Prostate gland (tissue), 2 donors: ENCODE measurements at regions of chr12 and their contacts with region 1.

Region 1: DNA sequence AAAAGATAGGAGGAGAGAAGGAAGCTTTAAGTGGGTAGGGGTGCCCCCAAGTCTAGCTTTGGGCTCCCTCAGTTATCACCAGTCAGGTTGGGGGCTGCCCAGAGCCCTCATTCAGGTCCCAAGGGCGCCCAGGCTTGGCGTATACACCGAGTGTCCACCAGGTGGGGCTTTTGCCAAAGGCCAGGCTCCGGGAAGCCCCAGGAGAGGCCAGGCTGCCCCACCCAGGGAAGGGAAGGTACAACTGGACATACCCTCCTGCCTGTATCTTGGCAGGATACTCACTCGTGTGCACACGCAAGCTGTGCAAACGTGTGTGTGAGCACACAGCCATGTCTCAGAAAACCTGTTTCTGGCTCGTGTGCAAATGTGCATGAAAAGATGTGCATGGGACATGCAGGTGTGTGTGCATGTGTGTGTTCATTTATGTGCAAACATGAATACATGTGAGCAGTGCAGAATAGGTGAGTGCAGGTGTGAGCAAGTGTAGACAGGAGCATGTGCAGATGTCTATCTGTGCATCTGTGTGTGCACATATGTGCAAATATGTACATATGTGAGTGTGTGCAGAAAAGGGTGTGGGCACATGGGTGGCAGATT is 103.9 kb upstream of the MYL2 start:
- DNase-seq: peak; percentile 68
- H3K4me3 ChIP-seq: no peak overlapping the region
- H3K27ac ChIP-seq: no peak overlapping the region
- H3K4me1 ChIP-seq: no peaks in the 10 kb centered on the region
- H3K27me3 ChIP-seq: no peaks in the 10 kb centered on the region
- CTCF ChIP-seq: peak; percentile 70 to 94 (median 93)
- POLR2A ChIP-seq: no peak

Region 2: GRCh38 chr12:111174251-111174960 is 150.1 kb after region 1 on chr12:
- intact Hi-C with region 1: loop called (anchors 10 kb)
- DNase-seq: no peak
- H3K4me3 ChIP-seq: no peak overlapping the region
- H3K27ac ChIP-seq: no peak overlapping the region
- H3K4me1 ChIP-seq: no peaks in the 10 kb centered on the region
- H3K27me3 ChIP-seq: no peaks in the 10 kb centered on the region
- CTCF ChIP-seq: peak in 3 of 4 experiments; percentile 29 to 53 (median 50)
- POLR2A ChIP-seq: no peak

Region 3: GRCh38 chr12:111313833-111314259 is 289.5 kb after region 1 on chr12:
- intact Hi-C with region 1: loop called (anchors 5 kb)
- DNase-seq: peak; percentile 57
- H3K4me3 ChIP-seq: no peak overlapping the region
- H3K27ac ChIP-seq: no peak overlapping the region
- H3K4me1 ChIP-seq: no peaks in the 10 kb centered on the region
- H3K27me3 ChIP-seq: no peaks in the 10 kb centered on the region
- CTCF ChIP-seq: peak; percentile 79 to 93 (median 92)
- POLR2A ChIP-seq: no peak